ENCODE measurements at regions of chr9 and their contacts with region 1.

Region 1: DNA sequence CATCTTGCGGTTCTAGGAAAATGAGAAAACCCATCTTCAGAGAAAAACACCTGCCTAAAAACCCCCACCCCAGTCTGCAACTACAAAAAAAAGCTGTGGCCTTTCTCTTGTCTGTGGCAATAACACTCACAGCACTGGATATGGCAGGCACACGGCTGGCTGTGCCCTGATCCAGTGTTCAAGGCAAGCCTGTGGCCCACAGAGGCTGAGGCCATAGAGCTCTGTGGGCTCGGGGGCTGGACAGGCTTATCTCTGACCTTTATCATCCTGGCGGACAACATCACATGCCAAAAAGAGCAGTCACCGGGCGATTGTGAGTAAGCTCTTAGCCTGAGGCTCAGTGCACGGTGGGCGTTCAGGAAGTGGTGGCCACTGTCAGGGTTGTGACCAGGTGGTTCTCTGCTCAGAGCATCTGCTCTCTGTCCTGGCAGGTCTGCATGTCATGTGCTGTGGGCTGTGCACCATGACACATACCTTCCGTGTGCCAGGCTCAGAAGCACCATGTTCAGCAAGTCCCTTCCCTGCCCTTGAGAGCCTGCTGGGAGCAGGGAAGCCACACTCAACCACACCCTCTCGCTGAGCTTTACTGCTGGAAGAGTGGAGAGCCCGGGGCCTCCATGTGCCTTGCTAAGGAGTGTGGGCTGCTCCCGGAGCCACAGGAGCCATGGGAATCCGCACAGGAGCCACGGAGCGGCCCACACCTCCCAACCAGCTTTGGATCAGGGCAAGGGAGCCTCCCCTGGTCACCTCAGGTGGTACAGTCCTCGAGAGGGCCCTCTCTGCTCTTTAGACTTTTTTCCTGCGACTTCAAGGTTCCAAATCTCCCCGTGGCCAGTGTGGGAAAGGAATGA is 34.6 kb upstream of the WDR38 start:
- DNase-seq: peak; percentile 90
- ATAC-seq: peak; percentile 91
- H3K4me3 ChIP-seq: peak overlapping the region; percentile 48 to 72 (median 54)
- H3K27ac ChIP-seq: peak overlapping the region; percentile 63
- H3K4me1 ChIP-seq: peaks cover 46% of the 10 kb centered on the region
- H3K27me3 ChIP-seq: no peaks in the 10 kb centered on the region
- CTCF ChIP-seq: no peak; the same call in 1 of the 2 replicates
- EP300 ChIP-seq: 0 out of 4 replicates have a peak, but pooled peaks have one; percentile 13 to 19
- POLR2A ChIP-seq: peak; percentile 41 to 67; a peak in 3 of 4 replicates
- RAD21 ChIP-seq: 0 out of 2 replicates have a peak, but pooled peaks have one; percentile 29

Region 2: GRCh38 chr9:124776954-124777665 is 41.5 kb before region 1 on chr9 and contains the start of gene OLFML2A:
- CTCF ChIA-PET with region 1: interaction called, 6 read pairs
- POLR2A ChIA-PET with region 1: interaction called, 10 read pairs
- in situ Hi-C with region 1: no loop called
- intact Hi-C with region 1: loop called (anchors 5 kb)
- DNase-seq: no peak
- ATAC-seq: peak; percentile 23
- H3K4me3 ChIP-seq: peak within 1 kb of the TSS; percentile 47 to 72 (median 50)
- H3K27ac ChIP-seq: no peak within 1 kb of the TSS
- H3K4me1 ChIP-seq: peaks cover 61% of the 10 kb centered on the region
- H3K27me3 ChIP-seq: peaks cover 2 to 22% of the 10 kb centered on the region in 2 experiments; a peak in 4 of 5 replicates
- CTCF ChIP-seq: peak; percentile 68; the same call in 1 of the 2 replicates
- EP300 ChIP-seq: no peak
- POLR2A ChIP-seq: no peak
- RAD21 ChIP-seq: no peak; the same call in 1 of the 2 replicates
- total RNA-seq, gene OLFML2A: 0.02 TPM in 1 of 2 replicates, not detected in the other

Region 3: DNA sequence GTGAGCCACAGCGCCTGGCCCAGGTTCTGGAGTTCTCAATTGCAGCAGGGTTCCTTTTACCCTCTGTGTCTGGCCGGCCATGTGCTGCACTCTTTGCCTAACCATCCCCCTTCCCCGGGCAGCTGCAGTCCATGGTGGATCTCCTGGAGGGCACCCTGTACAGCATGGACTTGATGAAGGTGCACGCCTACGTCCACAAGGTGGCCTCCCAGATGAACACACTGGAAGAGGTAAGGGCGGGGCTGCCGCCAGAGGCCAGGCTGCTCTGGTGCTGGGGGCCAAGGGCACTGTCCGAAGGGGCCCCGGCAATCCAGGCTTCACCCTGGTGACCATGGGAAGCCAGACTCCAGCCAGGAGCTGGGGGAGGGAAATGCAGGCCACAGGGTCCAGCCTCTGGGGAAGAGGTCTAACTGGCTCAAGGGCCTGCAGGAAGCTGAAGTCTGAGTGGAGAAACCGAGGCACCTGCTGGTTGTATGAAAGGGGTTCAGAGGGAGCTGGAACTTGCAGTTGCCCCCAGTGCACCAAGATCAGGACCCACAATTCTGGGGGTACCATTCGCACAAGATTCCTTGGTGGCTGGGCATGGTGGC is 23.7 kb before region 1 on chr9:
- CTCF ChIA-PET with region 1: interaction called, 6 read pairs
- POLR2A ChIA-PET with region 1: interaction called, 11 read pairs
- in situ Hi-C with region 1: no loop called
- intact Hi-C with region 1: loop called (anchors 2 kb)
- DNase-seq: peak; percentile 88
- ATAC-seq: peak; percentile 97
- H3K4me3 ChIP-seq: no peak overlapping the region
- H3K27ac ChIP-seq: no peak overlapping the region
- H3K4me1 ChIP-seq: peaks cover 33% of the 10 kb centered on the region
- H3K27me3 ChIP-seq: peaks cover 1 to 23% of the 10 kb centered on the region in 2 experiments; a peak in 2 of 5 replicates
- CTCF ChIP-seq: peak; percentile 97
- EP300 ChIP-seq: no peak
- POLR2A ChIP-seq: no peak
- RAD21 ChIP-seq: peak; percentile 77

Region 4: DNA sequence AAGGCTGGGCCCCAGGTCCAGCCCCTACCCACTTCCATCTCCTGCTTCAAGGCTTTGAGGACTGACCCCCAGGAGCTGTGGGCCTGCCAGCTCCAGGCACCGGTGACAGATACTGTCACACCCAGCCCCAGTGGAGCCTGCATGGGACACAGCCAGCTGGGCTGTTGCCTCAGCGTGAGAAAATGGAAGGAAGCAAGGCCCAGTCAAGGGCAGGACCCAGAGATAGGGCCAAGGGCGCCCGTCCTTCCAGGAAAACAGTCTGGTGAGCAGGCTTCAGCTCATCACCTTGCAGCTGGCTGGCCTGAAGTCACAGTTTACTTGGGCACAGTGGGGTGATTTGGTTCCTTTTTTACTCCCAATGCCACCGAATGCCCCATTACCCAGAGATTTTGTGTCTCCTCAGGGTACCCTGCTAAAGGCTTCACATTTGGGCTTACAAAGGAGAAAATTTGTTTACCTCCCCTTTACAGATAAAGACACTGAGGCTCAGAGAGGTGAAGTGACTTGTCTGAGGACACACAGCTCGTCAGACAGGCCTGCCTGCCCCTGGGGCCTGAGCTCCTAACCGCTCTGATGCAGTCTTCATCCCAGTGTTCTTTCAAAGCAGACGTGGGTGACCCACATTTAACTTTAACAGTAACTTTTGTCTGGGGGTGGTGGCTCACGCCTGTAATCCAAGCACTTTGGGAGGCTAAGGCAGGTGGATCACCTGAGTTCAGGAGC is 13.1 kb after region 1 on chr9:
- CTCF ChIA-PET with region 1: no interaction called
- POLR2A ChIA-PET with region 1: interaction called, 15 read pairs
- in situ Hi-C with region 1: no loop called
- intact Hi-C with region 1: no loop called
- DNase-seq: no peak
- ATAC-seq: peak; percentile 55
- H3K4me3 ChIP-seq: 0 out of 6 replicates have a peak overlapping the region, but pooled peaks of 1 of the 3 experiments have one; percentile 62
- H3K27ac ChIP-seq: no peak overlapping the region
- H3K4me1 ChIP-seq: peaks cover 40% of the 10 kb centered on the region
- H3K27me3 ChIP-seq: peaks cover 3 to 21% of the 10 kb centered on the region in 2 experiments; a peak in 4 of 5 replicates
- CTCF ChIP-seq: no peak
- EP300 ChIP-seq: no peak
- POLR2A ChIP-seq: no peak
- RAD21 ChIP-seq: no peak

Region 5: GRCh38 chr9:124839612-124840299 is 21.1 kb after region 1 on chr9:
- CTCF ChIA-PET with region 1: no interaction called
- POLR2A ChIA-PET with region 1: interaction called, 10 read pairs
- in situ Hi-C with region 1: no loop called
- intact Hi-C with region 1: no loop called
- DNase-seq: peak; percentile 43
- ATAC-seq: peak; percentile 73
- H3K4me3 ChIP-seq: peak overlapping the region in 1 of 3 experiments; percentile 60; a peak in 1 of 6 replicates
- H3K27ac ChIP-seq: no peak overlapping the region
- H3K4me1 ChIP-seq: peaks cover 34% of the 10 kb centered on the region
- H3K27me3 ChIP-seq: peaks cover 0 to 6% of the 10 kb centered on the region in 2 experiments; a peak in 2 of 5 replicates
- CTCF ChIP-seq: peak; percentile 58
- EP300 ChIP-seq: no peak
- POLR2A ChIP-seq: no peak
- RAD21 ChIP-seq: no peak

Region 6: DNA sequence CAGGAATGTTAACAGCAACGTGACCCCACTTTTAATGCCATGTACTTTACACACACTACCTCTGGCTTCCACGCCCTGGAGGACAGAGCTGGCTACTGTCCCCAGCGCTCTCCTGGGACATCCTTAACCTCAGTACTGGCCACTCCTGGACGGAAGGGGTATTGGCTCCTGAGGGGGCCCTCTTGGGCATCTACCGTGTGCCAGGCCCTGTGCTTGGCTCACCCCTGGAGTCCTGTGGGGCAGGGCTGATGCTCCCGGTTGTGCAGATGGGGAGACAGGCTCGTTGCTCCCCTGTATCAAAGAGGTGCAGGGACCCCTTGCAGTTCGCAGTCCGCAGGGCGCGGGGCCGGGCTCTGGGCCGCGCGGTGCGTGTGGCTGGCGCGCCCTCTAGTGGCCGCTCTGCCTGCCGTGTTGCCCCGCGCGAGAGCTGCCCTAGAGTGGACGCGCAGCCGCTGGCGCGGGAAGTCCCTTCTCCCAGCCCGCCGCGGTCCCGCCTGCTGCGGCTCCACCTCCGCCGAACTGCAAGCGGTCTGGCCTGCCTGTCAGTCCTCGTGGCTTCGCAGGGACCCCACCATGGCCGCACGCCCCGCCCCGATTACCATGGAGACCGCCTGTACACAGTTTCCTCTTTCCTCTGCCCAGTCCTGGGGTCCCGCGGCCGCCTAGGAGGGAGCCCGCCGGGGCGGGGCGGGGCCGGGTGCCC is 34.3 kb after region 1 on chr9 and contains the start of gene WDR38:
- CTCF ChIA-PET with region 1: interaction called, 6 read pairs
- POLR2A ChIA-PET with region 1: interaction called, 14 read pairs
- in situ Hi-C with region 1: no loop called
- intact Hi-C with region 1: no loop called
- DNase-seq: peak; percentile 77
- ATAC-seq: peak; percentile 79
- H3K4me3 ChIP-seq: peak within 1 kb of the TSS; percentile 24 to 69 (median 54); a peak in 5 of 6 replicates
- H3K27ac ChIP-seq: no peak within 1 kb of the TSS
- H3K4me1 ChIP-seq: peaks cover 38% of the 10 kb centered on the region
- H3K27me3 ChIP-seq: no peaks in the 10 kb centered on the region; a peak in 2 of 5 replicates
- CTCF ChIP-seq: peak; percentile 96
- EP300 ChIP-seq: no peak
- POLR2A ChIP-seq: no peak
- RAD21 ChIP-seq: peak; percentile 99
- total RNA-seq, gene WDR38: not detected in 2 replicates

Region 7: DNA sequence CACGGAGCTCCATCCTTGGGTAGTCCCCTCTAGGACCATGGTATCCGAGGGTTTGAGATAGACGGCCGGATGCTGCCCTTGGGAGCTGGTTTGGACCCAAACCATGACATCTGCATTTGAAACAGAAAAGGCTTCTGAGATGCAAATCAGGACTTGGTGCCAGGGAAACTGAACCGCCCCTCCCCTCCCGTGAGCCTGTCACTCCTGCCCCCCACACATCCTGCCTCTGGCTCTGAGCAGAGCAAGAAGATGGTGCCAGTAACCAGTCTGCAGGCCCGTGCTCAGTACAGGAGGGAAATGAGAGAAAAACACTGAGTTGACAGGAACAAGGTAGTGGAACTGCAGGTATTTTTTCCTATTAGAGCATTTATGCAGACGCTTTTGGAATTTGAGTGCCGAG is 61.8 kb after region 1 on chr9:
- CTCF ChIA-PET with region 1: no interaction called
- POLR2A ChIA-PET with region 1: no interaction called
- in situ Hi-C with region 1: no loop called
- intact Hi-C with region 1: no loop called
- DNase-seq: no peak
- ATAC-seq: no peak
- H3K4me3 ChIP-seq: no peak overlapping the region
- H3K27ac ChIP-seq: no peak overlapping the region
- H3K4me1 ChIP-seq: no peaks in the 10 kb centered on the region
- H3K27me3 ChIP-seq: no peaks in the 10 kb centered on the region
- CTCF ChIP-seq: no peak
- EP300 ChIP-seq: no peak
- POLR2A ChIP-seq: no peak
- RAD21 ChIP-seq: no peak

Measured in HepG2 (cell line).